ENCODE measurements at regions of chr7 and their contacts with region 1.

Region 1: GRCh38 chr7:128209229-128210035 is 31.6 kb upstream of the LEP start:
- DNase-seq: peak; percentile 75
- ATAC-seq: peak; percentile 94

Region 2: DNA sequence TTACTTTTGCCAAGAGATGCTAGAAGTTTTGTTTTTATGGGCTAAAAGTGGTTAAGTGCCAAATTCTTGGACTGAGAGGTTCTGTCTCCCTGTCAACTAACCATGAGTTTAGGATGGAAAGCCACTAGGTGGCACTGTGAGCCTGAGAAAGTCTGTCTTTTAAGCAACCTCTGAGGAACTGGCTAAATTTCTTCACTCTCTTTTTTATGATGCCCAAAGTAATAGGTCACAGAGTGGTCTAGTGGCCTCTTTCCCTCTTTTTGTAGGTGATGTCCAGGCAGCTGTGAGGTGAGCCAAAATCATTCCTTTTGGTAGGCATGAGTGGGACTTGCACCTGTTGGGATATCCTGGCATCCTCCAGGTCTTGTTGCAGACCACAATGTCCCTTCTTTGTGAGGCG is 500.6 kb before region 1 on chr7:
- intact Hi-C with region 1: loop called (anchors 2 kb)
- DNase-seq: peak; percentile 47
- ATAC-seq: peak; percentile 92

Region 3: DNA sequence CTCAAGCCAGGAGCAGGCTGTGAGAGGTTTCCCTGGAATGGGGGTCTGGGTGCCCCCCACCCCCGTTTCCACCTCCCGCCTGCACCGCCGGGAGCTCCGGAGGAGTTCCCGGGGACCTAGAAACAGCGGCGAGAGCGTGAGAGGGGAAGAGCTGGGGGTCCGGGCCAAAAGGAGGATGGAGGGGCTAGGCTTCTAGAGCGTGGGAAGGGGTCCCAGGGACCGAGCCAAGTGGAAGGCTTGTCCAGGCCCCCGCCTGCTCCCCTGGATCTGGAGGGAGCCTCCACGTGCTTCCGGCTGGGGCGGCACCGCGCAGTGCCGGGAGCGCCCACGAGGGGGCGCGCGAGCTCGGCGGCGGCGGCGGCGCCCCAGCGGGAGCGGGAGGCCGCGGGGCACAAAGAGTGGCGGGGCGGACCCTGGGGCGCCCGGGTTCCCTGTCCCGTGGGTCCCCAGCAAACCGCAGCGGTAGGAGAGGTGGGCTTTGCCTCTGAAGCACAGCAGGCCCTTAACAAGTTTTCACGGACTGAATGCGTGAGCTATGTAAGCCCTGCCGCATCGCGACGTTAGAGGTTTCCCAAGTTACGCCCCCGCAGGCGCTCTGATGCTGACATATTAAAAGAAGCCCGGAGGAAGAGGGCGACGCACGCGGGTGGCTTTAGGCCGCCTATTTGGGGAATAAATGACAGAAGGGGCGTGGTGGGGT is 73.8 kb before region 1 on chr7:
- intact Hi-C with region 1: loop called (anchors 5 kb)
- DNase-seq: peak; percentile 69
- ATAC-seq: peak; percentile 98

Measured in Right ventricle myocardium superior (tissue), 1 donor.